Endothelial cell of umbilical vein (primary cell): ENCODE measurements at regions of chr17 and their contacts with region 1.

Region 1: DNA sequence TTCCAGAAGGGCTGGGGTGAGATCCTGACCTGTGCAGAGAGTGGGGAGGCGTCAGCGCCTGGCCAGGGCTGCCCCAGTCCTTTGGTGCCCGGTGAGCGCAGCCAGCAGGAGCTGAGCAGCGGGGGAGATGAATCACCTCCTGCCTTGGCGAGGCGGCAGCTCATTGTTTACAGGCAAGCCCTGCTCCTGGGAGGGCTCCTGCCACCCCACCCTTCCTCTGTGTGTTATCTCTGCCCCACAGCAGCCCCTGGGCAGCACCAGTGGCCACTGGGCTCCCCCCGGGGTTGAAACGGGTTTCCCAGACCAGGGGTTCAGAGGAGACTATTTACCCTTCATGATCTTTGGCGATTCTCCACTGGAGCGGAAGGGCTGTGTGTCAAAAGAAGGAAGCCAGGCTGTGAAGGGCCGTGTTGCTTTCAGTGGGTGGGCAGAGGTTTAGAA is 14.1 kb upstream of the ITGB4 start:
- DNase-seq: peak; percentile 97
- H3K4me3 ChIP-seq: no peak overlapping the region
- H3K27ac ChIP-seq: peak overlapping the region; percentile 70
- H3K4me1 ChIP-seq: peaks cover 32% of the 10 kb centered on the region
- H3K27me3 ChIP-seq: no peaks in the 10 kb centered on the region
- CTCF ChIP-seq: no peak
- POLR2A ChIP-seq: peak; percentile 72

Region 2: DNA sequence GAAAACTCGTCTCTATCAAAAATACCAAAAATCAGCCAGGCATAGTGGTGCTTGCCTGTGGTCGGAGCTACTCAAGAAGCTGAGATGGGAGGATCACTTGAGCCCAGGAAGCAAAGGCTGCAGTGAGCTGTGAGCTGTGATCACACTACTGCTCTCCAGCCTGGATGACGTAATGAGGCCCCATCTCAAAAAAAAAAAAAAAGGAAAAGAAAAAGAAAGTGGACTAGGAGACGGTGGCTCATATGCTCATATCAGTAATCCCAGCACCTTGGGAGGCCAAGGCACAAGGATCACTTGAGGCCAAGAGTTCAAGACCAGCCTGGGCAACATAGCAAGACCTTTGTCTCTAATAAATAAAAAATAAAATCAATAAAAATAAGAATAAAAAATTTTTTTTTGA is 515.6 kb before region 1 on chr17:
- CTCF ChIA-PET with region 1: no interaction called
- POLR2A ChIA-PET with region 1: no interaction called
- dilution Hi-C with region 1: no loop called
- intact Hi-C with region 1: no loop called
- DNase-seq: no peak
- H3K4me3 ChIP-seq: no peak overlapping the region
- H3K27ac ChIP-seq: no peak overlapping the region
- H3K4me1 ChIP-seq: no peaks in the 10 kb centered on the region
- H3K27me3 ChIP-seq: no peaks in the 10 kb centered on the region
- CTCF ChIP-seq: no peak
- POLR2A ChIP-seq: no peak

Region 3: DNA sequence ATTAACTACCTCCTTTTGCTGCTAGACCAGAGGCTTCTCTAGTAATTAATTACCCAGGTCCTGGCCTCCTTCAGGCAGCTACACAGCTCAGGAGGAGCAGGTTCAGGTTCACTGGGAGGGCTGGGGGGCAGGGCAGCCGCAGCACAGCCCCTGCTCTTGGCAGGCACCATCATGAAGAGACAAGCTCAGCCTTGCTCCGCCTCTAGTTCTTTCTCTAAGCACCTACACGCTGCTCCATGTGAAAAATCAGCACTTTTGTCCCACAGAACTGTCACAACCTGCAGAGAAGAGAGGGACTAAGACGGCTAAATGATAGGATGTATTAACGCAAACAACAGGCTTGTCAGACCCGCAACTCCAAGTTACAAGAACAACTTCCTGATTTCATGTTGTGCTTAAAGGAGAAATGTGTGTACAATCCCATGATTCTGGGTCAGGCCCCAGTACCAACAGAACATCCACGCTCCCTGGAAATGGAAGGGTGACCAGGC is 355.0 kb before region 1 on chr17:
- CTCF ChIA-PET with region 1: no interaction called
- POLR2A ChIA-PET with region 1: no interaction called
- dilution Hi-C with region 1: no loop called
- intact Hi-C with region 1: no loop called
- DNase-seq: no peak
- H3K4me3 ChIP-seq: no peak overlapping the region
- H3K27ac ChIP-seq: no peak overlapping the region
- H3K4me1 ChIP-seq: peaks cover 7% of the 10 kb centered on the region
- H3K27me3 ChIP-seq: no peaks in the 10 kb centered on the region
- CTCF ChIP-seq: no peak
- POLR2A ChIP-seq: no peak

Region 4: GRCh38 chr17:75693500-75694481 is 13.4 kb before region 1 on chr17:
- CTCF ChIA-PET with region 1: interaction called, 20 read pairs
- POLR2A ChIA-PET with region 1: interaction called, 4 read pairs
- dilution Hi-C with region 1: no loop called
- intact Hi-C with region 1: no loop called
- DNase-seq: peak; percentile 78
- H3K4me3 ChIP-seq: no peak overlapping the region
- H3K27ac ChIP-seq: peak overlapping the region; percentile 80
- H3K4me1 ChIP-seq: peaks cover 72% of the 10 kb centered on the region
- H3K27me3 ChIP-seq: no peaks in the 10 kb centered on the region
- CTCF ChIP-seq: peak; percentile 3 to 16
- POLR2A ChIP-seq: peak; percentile 63

Region 5: GRCh38 chr17:75725500-75725899 is 18.3 kb after region 1 on chr17:
- CTCF ChIA-PET with region 1: no interaction called
- POLR2A ChIA-PET with region 1: no interaction called
- dilution Hi-C with region 1: no loop called
- intact Hi-C with region 1: no loop called
- DNase-seq: no peak
- H3K4me3 ChIP-seq: no peak overlapping the region
- H3K27ac ChIP-seq: no peak overlapping the region
- H3K4me1 ChIP-seq: peaks cover 2% of the 10 kb centered on the region
- H3K27me3 ChIP-seq: peaks cover 0 to 2% of the 10 kb centered on the region in 2 experiments
- CTCF ChIP-seq: no peak
- POLR2A ChIP-seq: no peak